ENCODE measurements at regions of chr20 and their contacts with region 1.

Region 1: GRCh38 chr20:38645980-38646858 is 44.6 kb downstream of the ARHGAP40 start:
- DNase-seq: peak; percentile 74
- H3K4me3 Mint-ChIP-seq: peak overlapping the region; percentile 60
- H3K27ac Mint-ChIP-seq: no peak overlapping the region
- H3K4me1 Mint-ChIP-seq: peaks cover 9% of the 10 kb centered on the region
- H3K27me3 Mint-ChIP-seq: peaks cover 42% of the 10 kb centered on the region
- CTCF ChIP-seq: peak; percentile 96

Region 2: GRCh38 chr20:38633577-38634093 is 12.6 kb before region 1 on chr20:
- CTCF ChIA-PET with region 1: interaction called, 33 read pairs
- POLR2A ChIA-PET with region 1: no interaction called
- intact Hi-C with region 1: no loop called
- DNase-seq: peak; percentile 63
- H3K4me3 Mint-ChIP-seq: no peak overlapping the region
- H3K27ac Mint-ChIP-seq: no peak overlapping the region
- H3K4me1 Mint-ChIP-seq: peaks cover 10% of the 10 kb centered on the region
- H3K27me3 Mint-ChIP-seq: no peaks in the 10 kb centered on the region
- CTCF ChIP-seq: peak; percentile 84

Region 3: GRCh38 chr20:38658879-38659596 is 12.8 kb after region 1 on chr20:
- CTCF ChIA-PET with region 1: interaction called, 76 read pairs
- POLR2A ChIA-PET with region 1: interaction called, 3 read pairs
- intact Hi-C with region 1: no loop called
- DNase-seq: peak; percentile 46
- H3K4me3 Mint-ChIP-seq: no peak overlapping the region
- H3K27ac Mint-ChIP-seq: no peak overlapping the region
- H3K4me1 Mint-ChIP-seq: no peaks in the 10 kb centered on the region
- H3K27me3 Mint-ChIP-seq: peaks cover 77% of the 10 kb centered on the region
- CTCF ChIP-seq: peak; percentile 71

Region 4: GRCh38 chr20:38730989-38731737 is 84.9 kb after region 1 on chr20:
- CTCF ChIA-PET with region 1: interaction called, 37 read pairs
- POLR2A ChIA-PET with region 1: interaction called, 3 read pairs
- intact Hi-C with region 1: loop called (anchors 1 kb)
- DNase-seq: peak; percentile 59
- H3K4me3 Mint-ChIP-seq: peak overlapping the region; percentile 52
- H3K27ac Mint-ChIP-seq: no peak overlapping the region
- H3K4me1 Mint-ChIP-seq: peaks cover 6% of the 10 kb centered on the region
- H3K27me3 Mint-ChIP-seq: peaks cover 93% of the 10 kb centered on the region
- CTCF ChIP-seq: peak; percentile 95

Region 5: GRCh38 chr20:38883081-38883980 is 237.1 kb after region 1 on chr20:
- CTCF ChIA-PET with region 1: interaction called, 10 read pairs
- POLR2A ChIA-PET with region 1: interaction called, 3 read pairs
- intact Hi-C with region 1: no loop called
- DNase-seq: peak; percentile 43
- H3K4me3 Mint-ChIP-seq: no peak overlapping the region
- H3K27ac Mint-ChIP-seq: no peak overlapping the region
- H3K4me1 Mint-ChIP-seq: peaks cover 10% of the 10 kb centered on the region
- H3K27me3 Mint-ChIP-seq: no peaks in the 10 kb centered on the region
- CTCF ChIP-seq: no peak

Region 6: GRCh38 chr20:38926142-38926933 is 280.1 kb after region 1 on chr20 and contains the start of gene FAM83D:
- CTCF ChIA-PET with region 1: interaction called, 12 read pairs
- POLR2A ChIA-PET with region 1: no interaction called
- intact Hi-C with region 1: no loop called
- DNase-seq: peak; percentile 98
- H3K4me3 Mint-ChIP-seq: peak within 1 kb of the TSS; percentile 77
- H3K27ac Mint-ChIP-seq: no peak within 1 kb of the TSS
- H3K4me1 Mint-ChIP-seq: peaks cover 19% of the 10 kb centered on the region
- H3K27me3 Mint-ChIP-seq: no peaks in the 10 kb centered on the region
- CTCF ChIP-seq: peak; percentile 56
- total RNA-seq, gene FAM83D: 10.7 and 18.4 TPM in 2 replicates

Measured in MCF 10A (cell line).